AG04449 (cell line): ENCODE measurements at regions of chr3 and their contacts with region 1.

Region 1: GRCh38 chr3:61561374-61562041 is at the start of gene PTPRG:
- DNase-seq: peak; percentile 71
- H3K4me3 ChIP-seq: peak within 1 kb of the TSS; percentile 78
- CTCF ChIP-seq: no peak

Region 2: GRCh38 chr3:60920519-60920918 is 641.0 kb before region 1 on chr3:
- CTCF ChIA-PET with region 1: no interaction called
- POLR2A ChIA-PET with region 1: no interaction called
- DNase-seq: no peak
- H3K4me3 ChIP-seq: no peak overlapping the region
- CTCF ChIP-seq: no peak

Region 3: DNA sequence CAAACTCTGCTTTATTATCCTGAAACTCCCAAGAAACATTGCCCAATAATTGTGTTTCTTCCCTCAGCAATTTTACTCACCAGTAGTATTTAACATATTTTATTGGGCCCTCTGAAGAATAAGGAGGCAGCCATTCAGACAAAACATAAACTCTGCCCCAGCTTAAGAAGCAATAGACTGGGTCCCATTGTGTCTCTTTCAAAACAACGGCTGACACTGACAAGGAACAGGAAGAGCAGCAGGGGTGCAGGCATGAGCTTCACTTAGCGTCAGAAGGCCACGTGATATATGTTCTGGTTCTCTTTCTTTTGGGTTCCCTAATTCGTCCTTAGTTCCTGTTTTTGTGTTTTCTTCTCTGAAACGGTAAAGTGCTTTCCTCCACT is 552.5 kb before region 1 on chr3:
- CTCF ChIA-PET with region 1: no interaction called
- POLR2A ChIA-PET with region 1: no interaction called
- DNase-seq: no peak
- H3K4me3 ChIP-seq: no peak overlapping the region
- CTCF ChIP-seq: no peak

Region 4: GRCh38 chr3:61571516-61572336 is 10.2 kb after region 1 on chr3:
- CTCF ChIA-PET with region 1: interaction called, 21 read pairs
- POLR2A ChIA-PET with region 1: interaction called, 10 read pairs
- DNase-seq: peak; percentile 54
- H3K4me3 ChIP-seq: no peak overlapping the region
- CTCF ChIP-seq: no peak

Region 5: GRCh38 chr3:61578667-61579367 is 17.3 kb after region 1 on chr3:
- CTCF ChIA-PET with region 1: interaction called, 21 read pairs
- POLR2A ChIA-PET with region 1: no interaction called
- DNase-seq: no peak
- H3K4me3 ChIP-seq: no peak overlapping the region
- CTCF ChIP-seq: no peak

Region 6: GRCh38 chr3:61936344-61936937 is 374.9 kb after region 1 on chr3:
- CTCF ChIA-PET with region 1: interaction called, 23 read pairs
- POLR2A ChIA-PET with region 1: no interaction called
- DNase-seq: no peak
- H3K4me3 ChIP-seq: no peak overlapping the region
- CTCF ChIP-seq: peak; percentile 62

Region 7: GRCh38 chr3:62131592-62131991 is 570.1 kb after region 1 on chr3:
- CTCF ChIA-PET with region 1: interaction called, 10 read pairs
- POLR2A ChIA-PET with region 1: no interaction called
- DNase-seq: no peak
- H3K4me3 ChIP-seq: no peak overlapping the region
- CTCF ChIP-seq: peak; percentile 13

Region 8: DNA sequence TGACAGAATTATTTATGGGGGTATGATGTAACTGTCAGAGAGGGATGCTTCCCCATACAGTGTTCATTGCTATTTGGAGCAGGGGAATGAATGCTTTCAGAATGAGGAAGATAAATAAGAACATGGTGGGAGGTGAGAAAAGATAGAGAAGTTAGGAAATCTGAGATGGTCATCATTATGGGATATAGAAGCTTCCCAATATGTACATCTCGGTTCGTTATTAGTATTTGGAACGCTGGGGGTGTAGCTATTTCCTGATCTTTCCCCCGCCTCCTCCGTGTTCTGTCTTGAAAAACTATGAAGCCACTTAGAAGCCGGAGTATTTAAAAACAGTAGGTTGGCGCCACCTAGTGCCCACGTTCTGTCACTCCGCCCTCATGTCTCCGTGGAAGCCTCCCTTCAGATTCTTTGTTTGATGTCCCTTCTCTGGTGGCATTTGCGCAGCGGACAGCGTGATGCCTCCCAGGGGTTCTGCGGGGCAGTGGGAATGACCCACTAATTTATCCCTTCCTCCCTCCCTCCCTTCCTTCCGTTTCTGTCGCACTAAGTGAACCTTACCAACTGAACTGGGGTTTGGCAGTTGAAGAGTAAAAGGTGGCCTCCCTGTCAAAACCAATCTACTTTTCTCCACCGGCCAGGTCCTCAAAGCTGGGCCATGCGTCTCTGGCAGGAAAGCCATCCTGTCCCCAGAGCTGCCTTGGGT is 627.3 kb after region 1 on chr3:
- CTCF ChIA-PET with region 1: interaction called, 66 read pairs
- POLR2A ChIA-PET with region 1: no interaction called
- DNase-seq: peak; percentile 23
- H3K4me3 ChIP-seq: peak overlapping the region; percentile 21; the same call in 1 of the 2 replicates
- CTCF ChIP-seq: peak; percentile 76